ENCODE measurements at regions of chr16 and their contacts with region 1.

Region 1: GRCh38 chr16:30091474-30092372 is at the start of gene TBX6:
- DNase-seq: peak; percentile 97
- total RNA-seq, gene TBX6: 0.57 TPM

Region 2: GRCh38 chr16:29940656-29941055 is 151.1 kb before region 1 on chr16:
- intact Hi-C with region 1: no loop called
- DNase-seq: no peak

Region 3: GRCh38 chr16:30122604-30123160 is 31.0 kb after region 1 on chr16:
- intact Hi-C with region 1: loop called (anchors 2 kb)
- DNase-seq: no peak

Region 4: GRCh38 chr16:30417529-30418349 is 326.0 kb after region 1 on chr16:
- intact Hi-C with region 1: loop called (anchors 10 kb)
- DNase-seq: peak; percentile 89

Measured in cardiac septum (tissue), 1 donor.